ENCODE measurements at regions of chr7 and their contacts with region 1.

Region 1: GRCh38 chr7:116236020-116236630 is 25.8 kb downstream of the TES start:
- DNase-seq: peak; percentile 66
- ATAC-seq: no peak
- H3K4me3 Mint-ChIP-seq: no peak overlapping the region
- H3K27ac Mint-ChIP-seq: no peak overlapping the region
- H3K4me1 Mint-ChIP-seq: peaks cover 70% of the 10 kb centered on the region
- H3K27me3 Mint-ChIP-seq: no peaks in the 10 kb centered on the region

Region 2: GRCh38 chr7:115984120-115984519 is 252.0 kb before region 1 on chr7:
- CTCF ChIA-PET with region 1: no interaction called
- POLR2A ChIA-PET with region 1: no interaction called
- intact Hi-C with region 1: no loop called
- DNase-seq: no peak
- ATAC-seq: no peak
- H3K4me3 Mint-ChIP-seq: no peak overlapping the region
- H3K27ac Mint-ChIP-seq: no peak overlapping the region
- H3K4me1 Mint-ChIP-seq: no peaks in the 10 kb centered on the region
- H3K27me3 Mint-ChIP-seq: no peaks in the 10 kb centered on the region

Region 3: DNA sequence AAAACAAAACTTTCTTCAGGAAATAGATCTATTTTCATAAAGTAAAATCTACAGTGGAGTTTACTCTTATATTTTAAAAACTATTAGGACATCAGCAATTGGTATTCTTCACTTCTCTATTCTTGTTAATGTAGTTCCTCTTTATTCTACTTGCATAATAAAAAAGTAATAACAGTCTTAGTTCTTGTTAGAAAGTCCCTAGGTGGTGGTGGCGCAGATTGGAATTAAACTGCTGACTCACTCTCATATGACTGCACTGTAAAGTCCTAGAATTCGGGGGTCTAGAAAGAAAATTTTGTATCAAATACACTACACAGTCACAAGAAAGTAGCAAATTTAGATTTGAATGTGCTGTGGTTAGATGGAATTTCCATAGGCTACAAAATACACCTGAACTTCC is 70.4 kb before region 1 on chr7:
- CTCF ChIA-PET with region 1: interaction called, 41 read pairs
- POLR2A ChIA-PET with region 1: interaction called, 3 read pairs
- intact Hi-C with region 1: no loop called
- DNase-seq: no peak
- ATAC-seq: no peak
- H3K4me3 Mint-ChIP-seq: no peak overlapping the region
- H3K27ac Mint-ChIP-seq: no peak overlapping the region
- H3K4me1 Mint-ChIP-seq: peaks cover 8% of the 10 kb centered on the region
- H3K27me3 Mint-ChIP-seq: peaks cover 15% of the 10 kb centered on the region

Region 4: GRCh38 chr7:116180302-116180701 is 55.8 kb before region 1 on chr7:
- CTCF ChIA-PET with region 1: interaction called, 293 read pairs
- POLR2A ChIA-PET with region 1: interaction called, 3 read pairs
- intact Hi-C with region 1: loop called (anchors 1 kb)
- DNase-seq: peak; percentile 21
- ATAC-seq: peak; percentile 74
- H3K4me3 Mint-ChIP-seq: no peak overlapping the region
- H3K27ac Mint-ChIP-seq: no peak overlapping the region
- H3K4me1 Mint-ChIP-seq: peaks cover 7% of the 10 kb centered on the region
- H3K27me3 Mint-ChIP-seq: no peaks in the 10 kb centered on the region

Region 5: GRCh38 chr7:116211006-116211912 is 24.9 kb before region 1 on chr7:
- CTCF ChIA-PET with region 1: interaction called, 36 read pairs
- POLR2A ChIA-PET with region 1: interaction called, 4 read pairs
- intact Hi-C with region 1: loop called (anchors 1 kb)
- DNase-seq: peak; percentile 87
- ATAC-seq: peak; percentile 80
- H3K4me3 Mint-ChIP-seq: peak overlapping the region; percentile 97
- H3K27ac Mint-ChIP-seq: peak overlapping the region; percentile 98
- H3K4me1 Mint-ChIP-seq: peaks cover 55% of the 10 kb centered on the region
- H3K27me3 Mint-ChIP-seq: no peaks in the 10 kb centered on the region

Region 6: DNA sequence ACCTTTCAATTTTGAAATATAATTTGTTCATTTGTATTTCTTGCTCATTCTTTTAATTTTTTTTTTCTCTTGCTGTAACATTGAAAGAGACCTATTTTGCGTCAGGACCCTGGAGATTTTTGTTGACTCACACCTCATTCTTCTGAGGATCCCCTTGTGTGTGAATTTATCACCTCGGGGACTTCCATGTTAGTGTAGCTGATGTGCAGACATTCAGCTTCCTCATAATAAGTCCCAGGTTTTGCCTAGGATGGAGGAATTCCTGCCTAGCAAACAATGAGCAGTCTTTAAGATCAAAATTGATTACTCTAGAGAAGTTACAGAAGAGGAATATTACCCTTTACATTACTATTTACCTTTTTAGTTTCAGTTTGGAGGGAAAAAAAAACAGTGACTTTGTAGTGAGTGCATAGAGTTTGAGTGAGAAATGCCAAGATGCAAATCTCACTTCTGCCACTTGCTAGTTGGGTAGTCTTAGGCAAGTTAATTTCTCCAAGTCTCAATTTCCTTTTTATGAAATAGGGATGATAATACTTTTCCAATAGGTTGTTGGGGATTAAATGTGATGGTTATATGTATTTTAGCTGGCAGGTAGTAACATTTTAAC is 11.5 kb before region 1 on chr7:
- CTCF ChIA-PET with region 1: interaction called, 14 read pairs
- POLR2A ChIA-PET with region 1: no interaction called
- intact Hi-C with region 1: no loop called
- DNase-seq: no peak
- ATAC-seq: peak; percentile 65
- H3K4me3 Mint-ChIP-seq: peak overlapping the region; percentile 7
- H3K27ac Mint-ChIP-seq: peak overlapping the region; percentile 64
- H3K4me1 Mint-ChIP-seq: peaks cover 82% of the 10 kb centered on the region
- H3K27me3 Mint-ChIP-seq: no peaks in the 10 kb centered on the region

Region 7: DNA sequence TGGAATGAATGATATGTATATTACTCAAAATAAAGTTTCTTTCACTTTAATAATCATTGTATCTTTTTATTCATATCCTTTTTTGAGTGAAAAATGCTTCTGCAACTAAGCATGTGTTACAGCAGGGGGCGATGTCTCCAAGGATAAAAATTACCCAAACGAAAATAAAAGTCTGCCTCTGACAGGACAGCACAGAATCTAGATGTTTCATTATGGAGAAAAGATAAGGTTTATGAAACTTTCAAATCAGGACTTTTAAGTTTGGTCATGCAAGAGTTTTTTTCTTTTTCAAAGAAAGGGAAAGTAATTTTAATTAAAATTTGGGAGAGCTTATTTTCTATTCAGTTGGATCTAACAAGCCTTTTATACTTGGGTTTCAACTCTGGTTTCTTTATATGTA is 22.6 kb after region 1 on chr7:
- CTCF ChIA-PET with region 1: interaction called, 27 read pairs
- POLR2A ChIA-PET with region 1: no interaction called
- intact Hi-C with region 1: no loop called
- DNase-seq: peak; percentile 39
- ATAC-seq: peak; percentile 68
- H3K4me3 Mint-ChIP-seq: no peak overlapping the region
- H3K27ac Mint-ChIP-seq: no peak overlapping the region
- H3K4me1 Mint-ChIP-seq: peaks cover 20% of the 10 kb centered on the region
- H3K27me3 Mint-ChIP-seq: no peaks in the 10 kb centered on the region

Measured in activated CD4-positive, alpha-beta T cell treated with anti-CD3 and anti-CD28 coated beads for 36 hours (primary cell).